ENCODE measurements at regions of chr1 and their contacts with region 1.

Region 1: DNA sequence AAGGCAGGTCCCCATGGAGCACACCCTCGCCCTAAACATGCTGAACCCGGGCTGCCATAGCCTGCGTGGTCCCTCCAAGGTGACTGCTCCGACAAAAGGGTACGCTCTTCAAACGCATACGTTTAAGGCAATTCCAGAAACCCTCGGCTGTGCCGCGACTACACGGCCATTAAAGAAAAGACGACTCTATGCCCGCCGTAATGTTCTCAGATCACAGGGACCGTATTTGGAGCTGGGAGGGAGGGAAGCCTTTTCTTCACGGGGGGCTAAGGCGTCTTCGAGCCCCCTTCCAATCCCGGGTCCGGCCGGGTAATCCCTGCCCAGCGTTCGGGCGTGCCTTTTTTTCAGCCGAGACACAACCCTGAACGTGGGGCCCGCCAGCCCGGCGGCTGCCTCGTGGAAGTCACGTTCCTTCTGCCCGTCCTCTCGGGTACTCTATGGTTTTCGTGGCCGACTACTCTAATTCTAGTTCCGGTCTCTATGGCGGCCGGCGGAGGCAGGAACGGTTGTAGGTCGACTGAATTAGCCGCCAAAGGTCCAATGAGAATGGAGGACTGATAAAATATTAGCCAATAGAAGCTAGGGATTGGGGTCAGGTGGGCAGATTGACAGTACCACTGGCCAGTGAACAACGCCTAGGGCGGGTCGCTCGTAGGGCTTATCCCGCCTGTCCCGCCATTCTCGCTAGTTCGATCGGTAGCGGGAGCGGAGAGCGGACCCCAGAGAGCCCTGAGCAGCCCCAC is at the start of gene YBX1:
- DNase-seq: peak; percentile 98
- ATAC-seq: peak; percentile 86
- H3K4me3 ChIP-seq: peak within 1 kb of the TSS; percentile 64 to 94 (median 82)
- H3K4me3 Mint-ChIP-seq: peak within 1 kb of the TSS; percentile 99
- H3K27ac ChIP-seq: peak within 1 kb of the TSS; percentile 80 to 97
- H3K27ac Mint-ChIP-seq: peak within 1 kb of the TSS; percentile 100
- H3K4me1 ChIP-seq: peaks cover 48 to 50% of the 10 kb centered on the region in 2 donors
- H3K4me1 Mint-ChIP-seq: peaks cover 54% of the 10 kb centered on the region
- H3K27me3 ChIP-seq: no peaks in the 10 kb centered on the region
- H3K27me3 Mint-ChIP-seq: no peaks in the 10 kb centered on the region
- CTCF ChIP-seq: no peak
- total RNA-seq, gene YBX1: 314 and 345 TPM in 2 replicates

Region 2: DNA sequence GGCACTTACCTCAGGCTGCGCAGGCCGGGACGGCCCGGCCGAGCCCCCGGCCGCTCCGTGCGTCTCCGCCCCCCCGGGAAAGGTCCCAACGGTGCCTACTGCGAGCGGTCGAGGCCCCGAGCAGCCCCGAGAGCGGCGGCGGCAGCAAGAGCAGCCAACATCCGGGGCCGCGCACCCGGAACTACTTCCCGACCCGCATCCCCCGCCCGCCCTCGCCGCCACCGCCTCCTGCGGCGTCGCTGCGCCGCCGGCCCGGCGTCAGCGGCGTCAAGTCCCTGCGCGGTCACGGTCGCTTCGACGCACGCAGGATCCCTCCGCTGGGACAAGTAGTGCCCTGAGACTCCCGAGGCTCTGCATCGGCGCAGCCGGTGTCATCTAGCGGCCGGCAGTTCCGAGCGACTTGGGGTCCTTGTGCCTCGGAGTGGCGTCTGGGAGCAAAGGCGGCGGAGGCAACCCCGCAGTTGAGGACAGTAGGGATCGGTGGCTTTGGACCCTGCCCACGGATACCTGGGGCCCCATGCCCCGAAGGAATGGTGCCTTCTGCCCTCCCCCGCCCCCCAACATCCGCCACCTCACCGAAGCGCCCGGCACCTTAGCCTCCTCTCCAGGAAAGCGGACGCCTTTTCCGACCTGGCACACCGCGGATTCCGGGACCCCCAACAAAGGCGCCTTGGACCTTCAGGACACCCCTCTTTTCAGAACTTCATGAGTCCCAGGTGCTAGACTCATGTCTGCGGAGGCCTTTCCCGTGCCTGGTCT is 346.7 kb before region 1 on chr1 and contains the start of gene FOXJ3:
- CTCF ChIA-PET with region 1: no interaction called
- POLR2A ChIA-PET with region 1: no interaction called
- intact Hi-C with region 1: loop called (anchors 1 kb)
- DNase-seq: peak; percentile 97
- ATAC-seq: peak; percentile 90
- H3K4me3 ChIP-seq: peak within 1 kb of the TSS; percentile 63 to 97 (median 89)
- H3K4me3 Mint-ChIP-seq: peak within 1 kb of the TSS; percentile 95
- H3K27ac ChIP-seq: peak within 1 kb of the TSS; percentile 75 to 91
- H3K27ac Mint-ChIP-seq: peak within 1 kb of the TSS; percentile 90
- H3K4me1 ChIP-seq: peaks cover 20 to 24% of the 10 kb centered on the region in 2 donors
- H3K4me1 Mint-ChIP-seq: peaks cover 44% of the 10 kb centered on the region
- H3K27me3 ChIP-seq: no peaks in the 10 kb centered on the region
- H3K27me3 Mint-ChIP-seq: no peaks in the 10 kb centered on the region
- CTCF ChIP-seq: no peak
- total RNA-seq, gene FOXJ3: 76.4 and 80.3 TPM in 2 replicates

Region 3: GRCh38 chr1:42657971-42658879 is 23.7 kb before region 1 on chr1 and contains the start of gene PPIH:
- CTCF ChIA-PET with region 1: interaction called, 13 read pairs
- POLR2A ChIA-PET with region 1: interaction called, 19 read pairs
- intact Hi-C with region 1: loop called (anchors 1 kb)
- DNase-seq: peak; percentile 94
- ATAC-seq: peak; percentile 99
- H3K4me3 ChIP-seq: peak within 1 kb of the TSS; percentile 45 to 90 (median 84)
- H3K4me3 Mint-ChIP-seq: peak within 1 kb of the TSS; percentile 99
- H3K27ac ChIP-seq: peak within 1 kb of the TSS; percentile 62 to 76
- H3K27ac Mint-ChIP-seq: peak within 1 kb of the TSS; percentile 93
- H3K4me1 ChIP-seq: peaks cover 15 to 22% of the 10 kb centered on the region in 2 donors
- H3K4me1 Mint-ChIP-seq: peaks cover 32% of the 10 kb centered on the region
- H3K27me3 ChIP-seq: no peaks in the 10 kb centered on the region
- H3K27me3 Mint-ChIP-seq: no peaks in the 10 kb centered on the region
- CTCF ChIP-seq: no peak
- total RNA-seq, gene PPIH: 48.8 and 50.3 TPM in 2 replicates

Region 4: DNA sequence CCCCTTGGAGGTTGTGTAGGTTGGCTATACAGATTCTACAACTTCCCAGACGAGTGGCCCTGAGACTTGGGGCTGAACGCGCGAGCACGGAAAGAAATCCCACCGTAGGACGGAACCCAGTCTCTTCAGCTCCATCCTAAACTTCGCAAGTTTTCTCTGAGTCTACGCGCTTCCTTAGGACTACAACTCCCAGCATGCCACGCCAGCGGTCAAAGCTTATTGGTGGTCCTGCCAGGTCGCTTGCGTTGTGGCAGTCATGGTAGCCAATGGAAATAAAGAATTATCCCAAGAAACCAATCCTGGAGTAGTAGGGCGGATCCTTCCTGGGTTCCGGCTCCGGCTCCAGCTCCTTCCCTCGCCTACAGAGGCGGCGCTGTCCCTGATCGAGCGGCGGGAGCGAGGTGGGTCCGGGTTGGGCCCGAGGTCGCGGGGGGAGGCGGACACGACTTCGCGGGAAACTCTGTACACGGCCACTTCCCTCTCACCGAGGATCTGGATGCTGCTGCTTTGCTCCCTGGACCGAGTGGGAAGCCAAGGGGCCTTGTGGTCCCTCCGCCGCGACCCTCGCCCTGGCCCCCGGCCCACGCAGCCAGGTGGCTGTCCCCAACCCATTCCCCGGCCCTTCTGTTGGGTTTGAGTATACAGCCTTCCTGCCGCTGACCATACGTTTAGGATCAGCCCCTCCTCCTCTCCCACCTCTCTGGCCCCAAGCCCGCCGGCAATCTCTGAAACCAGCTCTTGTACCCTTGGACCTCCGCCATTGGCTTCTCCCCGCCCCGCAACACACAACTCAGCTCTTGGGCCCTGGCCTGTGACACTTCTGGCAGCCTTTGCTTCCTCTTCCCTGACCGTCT is 164.6 kb after region 1 on chr1 and contains the start of gene ZNF691:
- CTCF ChIA-PET with region 1: interaction called, 4 read pairs
- POLR2A ChIA-PET with region 1: interaction called, 3 read pairs
- intact Hi-C with region 1: loop called (anchors 2 kb)
- DNase-seq: peak; percentile 93
- ATAC-seq: peak; percentile 98
- H3K4me3 ChIP-seq: peak within 1 kb of the TSS; percentile 80 to 92 (median 90)
- H3K4me3 Mint-ChIP-seq: peak within 1 kb of the TSS; percentile 95
- H3K27ac ChIP-seq: peak within 1 kb of the TSS; percentile 41 to 76
- H3K27ac Mint-ChIP-seq: peak within 1 kb of the TSS; percentile 91
- H3K4me1 ChIP-seq: peaks cover 17 to 24% of the 10 kb centered on the region in 2 donors
- H3K4me1 Mint-ChIP-seq: peaks cover 46% of the 10 kb centered on the region
- H3K27me3 ChIP-seq: no peaks in the 10 kb centered on the region
- H3K27me3 Mint-ChIP-seq: no peaks in the 10 kb centered on the region
- CTCF ChIP-seq: peak; percentile 16
- total RNA-seq, gene ZNF691: 17.1 and 18.4 TPM in 2 replicates

Measured in B cell (primary cell).